Natural killer cell (primary cell): ENCODE measurements at regions of chr20 and their contacts with region 1.

Region 1: DNA sequence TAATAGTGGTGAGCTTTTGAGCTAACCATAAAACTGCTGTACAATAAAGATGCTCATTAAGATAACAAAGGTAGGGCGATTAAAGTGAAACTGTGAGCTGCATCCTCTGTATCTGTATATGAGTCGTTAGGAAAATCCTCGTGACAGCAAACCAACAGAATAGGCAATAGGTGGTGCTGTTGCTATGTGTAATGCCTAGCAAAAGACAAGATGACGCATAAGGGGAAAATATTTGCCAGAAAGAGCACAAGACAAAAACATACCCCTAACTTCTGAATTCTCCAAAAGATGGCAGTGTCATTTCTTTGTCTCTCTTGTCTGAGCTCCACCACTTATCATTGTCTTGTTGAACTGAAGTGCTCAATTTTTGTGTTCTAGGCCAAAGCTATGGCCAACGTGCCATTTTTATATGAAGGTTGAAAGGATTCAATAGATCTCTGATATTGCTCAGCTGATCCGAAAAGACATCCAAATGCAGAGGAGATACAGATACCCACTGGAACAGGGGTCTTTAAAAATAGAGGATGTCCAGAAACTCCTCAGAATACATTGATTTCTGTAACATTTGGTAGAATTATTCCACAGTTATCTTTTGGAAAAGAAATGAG is 56.3 kb upstream of the ANKEF1 start:
- DNase-seq: peak in 1 of 2 donors; percentile 81
- ATAC-seq: peak; percentile 84 to 97 (median 93)
- H3K4me3 ChIP-seq: no peak overlapping the region
- H3K4me3 Mint-ChIP-seq: no peak overlapping the region
- H3K27ac ChIP-seq: no peak overlapping the region
- H3K27ac Mint-ChIP-seq: peak overlapping the region in 1 of 2 donors; percentile 23
- H3K4me1 ChIP-seq: no peaks in the 10 kb centered on the region
- H3K4me1 Mint-ChIP-seq: no peaks in the 10 kb centered on the region
- H3K27me3 ChIP-seq: no peaks in the 10 kb centered on the region
- H3K27me3 Mint-ChIP-seq: peaks cover 10 to 14% of the 10 kb centered on the region in 2 donors
- CTCF ChIP-seq: peak; percentile 79

Region 2: DNA sequence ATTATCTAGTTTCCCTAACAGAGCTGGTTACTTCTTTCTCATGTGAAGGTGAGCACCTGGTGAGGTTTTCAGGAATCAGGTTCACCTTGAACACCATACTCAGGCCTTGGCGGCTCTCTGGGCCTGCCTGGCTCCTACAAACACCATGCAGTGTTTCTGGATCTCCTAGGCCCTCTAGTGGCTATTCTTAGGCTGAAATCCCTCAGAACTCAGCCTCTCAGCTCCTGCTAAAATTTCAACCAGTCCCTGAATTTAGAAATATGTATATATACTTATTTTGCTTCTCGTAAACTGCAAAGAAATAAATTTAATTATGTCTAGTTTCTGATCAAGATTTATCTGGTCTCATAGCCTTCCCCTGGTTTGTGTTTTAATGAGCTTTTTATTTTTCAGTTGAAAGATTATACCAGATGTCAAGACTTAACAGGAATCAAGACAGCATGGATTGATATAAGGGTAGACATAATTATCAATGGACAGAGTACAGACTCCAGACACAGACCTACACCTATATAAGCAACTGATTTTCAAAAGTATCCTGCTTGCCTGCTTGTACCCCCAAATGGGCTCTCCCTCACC is 112.2 kb after region 1 on chr20:
- intact Hi-C with region 1: loop called (anchors 2 kb)
- DNase-seq: peak in 1 of 2 donors; percentile 62
- ATAC-seq: peak in 2 of 3 donors; percentile 51 to 63
- H3K4me3 ChIP-seq: no peak overlapping the region
- H3K4me3 Mint-ChIP-seq: no peak overlapping the region
- H3K27ac ChIP-seq: no peak overlapping the region
- H3K27ac Mint-ChIP-seq: no peak overlapping the region
- H3K4me1 ChIP-seq: no peaks in the 10 kb centered on the region
- H3K4me1 Mint-ChIP-seq: no peaks in the 10 kb centered on the region
- H3K27me3 ChIP-seq: no peaks in the 10 kb centered on the region
- H3K27me3 Mint-ChIP-seq: peaks cover 5 to 8% of the 10 kb centered on the region in 2 donors
- CTCF ChIP-seq: peak; percentile 48

Region 3: DNA sequence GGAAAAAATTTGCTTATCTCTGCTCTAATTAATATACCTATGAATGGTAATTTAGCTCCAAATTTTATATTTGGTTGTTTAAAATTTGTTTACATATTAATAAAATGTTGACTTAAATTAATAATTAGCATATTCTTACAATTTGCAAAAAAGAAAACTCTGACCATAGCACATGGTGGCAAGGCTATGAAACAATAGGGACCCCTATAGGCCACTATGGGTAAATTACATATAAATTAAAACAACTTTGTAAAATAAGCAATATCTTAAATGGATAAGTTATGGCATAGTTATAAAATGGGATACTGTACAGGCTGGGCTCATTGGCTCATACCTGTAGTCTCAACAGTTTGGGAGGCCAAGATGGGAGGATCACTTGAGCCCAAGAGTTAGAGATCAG is 379.5 kb after region 1 on chr20:
- intact Hi-C with region 1: loop called (anchors 1 kb)
- DNase-seq: peak in 1 of 2 donors; percentile 19
- ATAC-seq: peak; percentile 53 to 86 (median 77)
- H3K4me3 ChIP-seq: no peak overlapping the region
- H3K4me3 Mint-ChIP-seq: no peak overlapping the region
- H3K27ac ChIP-seq: no peak overlapping the region
- H3K27ac Mint-ChIP-seq: no peak overlapping the region
- H3K4me1 ChIP-seq: no peaks in the 10 kb centered on the region
- H3K4me1 Mint-ChIP-seq: peaks cover 0 to 9% of the 10 kb centered on the region in 2 donors
- H3K27me3 ChIP-seq: no peaks in the 10 kb centered on the region
- H3K27me3 Mint-ChIP-seq: peaks cover 2 to 16% of the 10 kb centered on the region in 2 donors
- CTCF ChIP-seq: peak; percentile 75

Region 4: DNA sequence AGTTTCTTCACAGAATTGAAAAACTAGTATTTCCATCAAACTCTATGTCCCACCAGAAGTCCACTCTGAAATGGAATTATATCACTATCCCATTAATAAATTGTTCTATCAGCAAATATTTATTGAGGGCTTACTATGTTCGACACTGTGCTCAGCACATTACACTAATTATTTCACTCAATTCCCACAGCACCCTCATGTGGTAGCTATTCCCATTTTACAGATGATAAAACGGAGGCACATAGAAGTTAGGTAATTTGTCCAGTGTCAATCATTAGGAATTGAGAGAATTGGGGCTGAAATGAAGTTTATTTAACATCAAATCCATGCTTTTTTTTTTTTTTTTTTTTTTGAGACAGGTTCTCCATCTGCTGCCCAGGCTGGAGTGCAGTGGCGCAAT is 403.0 kb after region 1 on chr20:
- intact Hi-C with region 1: loop called (anchors 1 kb)
- DNase-seq: peak in 1 of 2 donors; percentile 10
- ATAC-seq: no peak
- H3K4me3 ChIP-seq: no peak overlapping the region
- H3K4me3 Mint-ChIP-seq: no peak overlapping the region
- H3K27ac ChIP-seq: no peak overlapping the region
- H3K27ac Mint-ChIP-seq: no peak overlapping the region
- H3K4me1 ChIP-seq: no peaks in the 10 kb centered on the region
- H3K4me1 Mint-ChIP-seq: no peaks in the 10 kb centered on the region
- H3K27me3 ChIP-seq: no peaks in the 10 kb centered on the region
- H3K27me3 Mint-ChIP-seq: peaks cover 6 to 34% of the 10 kb centered on the region in 2 donors
- CTCF ChIP-seq: peak; percentile 20

Region 5: DNA sequence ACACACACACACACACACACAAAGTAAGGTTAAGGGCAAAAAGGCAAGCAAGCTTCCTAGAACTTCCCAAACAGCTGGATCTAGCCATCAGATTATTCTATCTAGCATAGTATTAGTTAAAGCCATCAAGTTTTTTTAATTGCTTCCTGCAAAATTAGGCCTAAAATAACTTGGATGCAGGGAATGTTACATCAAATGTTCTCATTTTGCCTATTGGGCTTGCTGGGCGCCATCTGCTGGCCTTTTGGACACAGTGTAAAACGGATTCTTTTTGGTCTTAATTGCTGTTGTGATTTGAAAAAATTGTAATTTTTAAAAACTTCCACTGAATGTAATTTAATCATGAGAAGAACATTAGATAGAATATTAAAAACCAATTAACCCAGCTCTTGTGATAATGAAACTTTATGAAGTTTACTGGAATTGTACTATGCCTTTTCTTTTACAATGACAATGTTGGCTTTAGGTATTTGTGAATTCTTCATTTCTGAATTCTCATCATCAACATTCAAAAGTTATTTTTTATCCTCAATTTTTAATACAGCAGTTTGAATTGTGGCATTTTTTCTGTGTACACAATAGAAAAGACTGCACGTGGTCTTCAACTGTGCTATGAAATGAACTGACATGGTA is 448.7 kb after region 1 on chr20:
- intact Hi-C with region 1: loop called (anchors 1 kb)
- DNase-seq: peak in 1 of 2 donors; percentile 70
- ATAC-seq: peak; percentile 50 to 69 (median 54)
- H3K4me3 ChIP-seq: no peak overlapping the region
- H3K4me3 Mint-ChIP-seq: no peak overlapping the region
- H3K27ac ChIP-seq: no peak overlapping the region
- H3K27ac Mint-ChIP-seq: no peak overlapping the region
- H3K4me1 ChIP-seq: no peaks in the 10 kb centered on the region
- H3K4me1 Mint-ChIP-seq: peaks cover 32 to 52% of the 10 kb centered on the region in 2 donors
- H3K27me3 ChIP-seq: no peaks in the 10 kb centered on the region
- H3K27me3 Mint-ChIP-seq: no peaks in the 10 kb centered on the region
- CTCF ChIP-seq: peak; percentile 87

Region 6: DNA sequence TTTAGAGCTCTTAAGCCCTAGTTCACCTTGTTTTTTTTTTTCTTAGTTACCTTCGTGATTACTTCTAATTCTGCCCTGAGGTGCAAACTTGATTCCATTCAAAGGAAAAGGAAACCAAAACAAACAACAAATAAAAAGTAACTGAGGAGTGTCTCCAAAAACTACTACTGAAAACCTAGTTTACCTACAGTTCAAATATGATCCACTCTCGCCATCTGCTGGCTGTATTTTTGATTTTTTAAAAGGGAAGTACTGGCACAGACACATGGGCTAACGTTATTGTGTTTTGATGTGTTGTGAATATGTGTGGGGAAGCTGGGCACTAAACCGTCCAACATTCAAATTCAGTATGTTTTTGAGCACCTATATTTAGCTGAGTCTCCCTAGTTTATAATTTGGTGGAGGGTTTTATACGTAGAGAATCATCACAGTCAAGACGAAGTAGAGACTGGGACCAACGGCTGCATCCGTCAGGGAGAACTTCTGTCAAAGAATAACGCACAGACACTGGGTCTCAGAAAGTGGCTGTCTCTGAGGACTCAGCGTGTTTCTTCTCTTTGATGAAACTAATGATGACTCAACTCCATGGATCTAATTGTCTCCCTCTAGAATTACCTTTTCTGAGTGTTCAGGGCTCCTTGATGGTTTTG is 1565.7 kb after region 1 on chr20:
- intact Hi-C with region 1: loop called (anchors 10 kb)
- DNase-seq: peak in 1 of 2 donors; percentile 26
- ATAC-seq: no peak
- H3K4me3 ChIP-seq: no peak overlapping the region
- H3K4me3 Mint-ChIP-seq: no peak overlapping the region
- H3K27ac ChIP-seq: no peak overlapping the region
- H3K27ac Mint-ChIP-seq: no peak overlapping the region
- H3K4me1 ChIP-seq: no peaks in the 10 kb centered on the region
- H3K4me1 Mint-ChIP-seq: no peaks in the 10 kb centered on the region
- H3K27me3 ChIP-seq: no peaks in the 10 kb centered on the region
- H3K27me3 Mint-ChIP-seq: no peaks in the 10 kb centered on the region
- CTCF ChIP-seq: no peak